ENCODE measurements at regions of chr11 and their contacts with region 1.

Region 1: GRCh38 chr11:47233989-47234668 is 14.5 kb downstream of the ACP2 start:
- DNase-seq: peak in 1 of 2 experiments; percentile 49
- H3K4me3 ChIP-seq: no peak overlapping the region
- H3K4me3 Mint-ChIP-seq: no peak overlapping the region
- H3K27ac Mint-ChIP-seq: peak overlapping the region; percentile 47
- H3K4me1 ChIP-seq: peaks cover 19% of the 10 kb centered on the region
- H3K4me1 Mint-ChIP-seq: peaks cover 12% of the 10 kb centered on the region
- H3K27me3 ChIP-seq: no peaks in the 10 kb centered on the region
- H3K27me3 Mint-ChIP-seq: no peaks in the 10 kb centered on the region
- CTCF ChIP-seq: peak; percentile 22 to 50

Region 2: GRCh38 chr11:47213985-47214564 is 20.1 kb before region 1 on chr11:
- CTCF ChIA-PET with region 1: interaction called, 4 read pairs
- POLR2A ChIA-PET with region 1: interaction called, 18 read pairs
- intact Hi-C with region 1: no loop called
- DNase-seq: peak; percentile 89
- H3K4me3 ChIP-seq: peak overlapping the region; percentile 73
- H3K4me3 Mint-ChIP-seq: peak overlapping the region; percentile 79
- H3K27ac Mint-ChIP-seq: peak overlapping the region; percentile 88
- H3K4me1 ChIP-seq: peaks cover 17% of the 10 kb centered on the region
- H3K4me1 Mint-ChIP-seq: peaks cover 22% of the 10 kb centered on the region
- H3K27me3 ChIP-seq: no peaks in the 10 kb centered on the region
- H3K27me3 Mint-ChIP-seq: no peaks in the 10 kb centered on the region
- CTCF ChIP-seq: no peak

Region 3: GRCh38 chr11:47296045-47296444 is 61.9 kb after region 1 on chr11:
- CTCF ChIA-PET with region 1: no interaction called
- POLR2A ChIA-PET with region 1: no interaction called
- intact Hi-C with region 1: no loop called
- DNase-seq: no peak
- H3K4me3 ChIP-seq: no peak overlapping the region
- H3K4me3 Mint-ChIP-seq: no peak overlapping the region
- H3K27ac Mint-ChIP-seq: no peak overlapping the region
- H3K4me1 ChIP-seq: no peaks in the 10 kb centered on the region
- H3K4me1 Mint-ChIP-seq: no peaks in the 10 kb centered on the region
- H3K27me3 ChIP-seq: no peaks in the 10 kb centered on the region
- H3K27me3 Mint-ChIP-seq: no peaks in the 10 kb centered on the region
- CTCF ChIP-seq: no peak

Region 4: GRCh38 chr11:47705721-47706120 is 471.6 kb after region 1 on chr11:
- CTCF ChIA-PET with region 1: no interaction called
- POLR2A ChIA-PET with region 1: interaction called, 11 read pairs
- intact Hi-C with region 1: no loop called
- DNase-seq: no peak
- H3K4me3 ChIP-seq: no peak overlapping the region
- H3K4me3 Mint-ChIP-seq: no peak overlapping the region
- H3K27ac Mint-ChIP-seq: no peak overlapping the region
- H3K4me1 ChIP-seq: no peaks in the 10 kb centered on the region
- H3K4me1 Mint-ChIP-seq: peaks cover 7% of the 10 kb centered on the region
- H3K27me3 ChIP-seq: no peaks in the 10 kb centered on the region
- H3K27me3 Mint-ChIP-seq: no peaks in the 10 kb centered on the region
- CTCF ChIP-seq: no peak